ENCODE measurements at regions of chr11 and their contacts with region 1.

Region 1: DNA sequence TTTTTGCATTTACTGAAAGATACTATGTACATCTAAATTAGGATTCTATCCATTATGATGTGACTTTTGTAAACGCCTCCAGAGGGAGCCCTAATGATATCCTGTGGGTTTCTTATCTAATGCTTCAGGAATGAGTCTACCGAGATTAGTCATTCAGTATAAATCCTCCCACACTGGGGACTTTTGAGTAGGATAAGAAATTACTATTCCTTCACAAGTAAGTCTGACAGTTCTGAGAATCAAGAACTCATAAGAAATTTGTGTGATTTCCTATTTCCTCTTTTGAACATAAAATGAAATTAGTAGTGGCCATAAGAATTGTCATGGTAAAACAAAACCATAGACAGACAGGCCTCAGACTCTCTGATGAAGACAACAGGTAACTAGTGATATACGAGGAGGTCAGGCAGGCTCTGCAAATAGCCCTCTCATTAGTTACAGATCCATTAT is 10.0 kb upstream of the OR5M1 start:
- ATAC-seq: peak in 5 of 8 experiments; percentile 44 to 96 (median 91)
- H3K4me3 ChIP-seq: no peak overlapping the region
- H3K27ac ChIP-seq: no peak overlapping the region
- H3K4me1 ChIP-seq: no peaks in the 10 kb centered on the region

Region 2: GRCh38 chr11:56474729-56475235 is 149.9 kb before region 1 on chr11:
- in situ Hi-C with region 1: no loop called
- ATAC-seq: no peak
- H3K4me3 ChIP-seq: no peak overlapping the region
- H3K27ac ChIP-seq: no peak overlapping the region
- H3K4me1 ChIP-seq: no peaks in the 10 kb centered on the region

Region 3: GRCh38 chr11:56776809-56777208 is 152.1 kb after region 1 on chr11:
- in situ Hi-C with region 1: loop called in 2 of 9 experiments (anchors 10 to 25 kb)
- ATAC-seq: no peak
- H3K4me3 ChIP-seq: no peak overlapping the region
- H3K27ac ChIP-seq: no peak overlapping the region
- H3K4me1 ChIP-seq: no peaks in the 10 kb centered on the region

Region 4: GRCh38 chr11:56783448-56784041 is 158.9 kb after region 1 on chr11:
- in situ Hi-C with region 1: loop called in 2 of 9 experiments (anchors 10 to 25 kb)
- ATAC-seq: peak in 3 of 8 experiments; percentile 38 to 60 (median 59)
- H3K4me3 ChIP-seq: no peak overlapping the region
- H3K27ac ChIP-seq: no peak overlapping the region
- H3K4me1 ChIP-seq: no peaks in the 10 kb centered on the region

Measured in motor neuron (in vitro differentiated cells).